Posterior cingulate gyrus (tissue), 11 donors: ENCODE measurements at regions of chr1 and their contacts with region 1.

Region 1: GRCh38 chr1:117284399-117285215 is 73.9 kb upstream of the VTCN1 start:
- DNase-seq: no peak

Region 2: GRCh38 chr1:117121776-117122697 is 162.6 kb before region 1 on chr1:
- intact Hi-C with region 1: loop called (anchors 5 kb)
- DNase-seq: peak; percentile 94 to 99 (median 97)

Region 3: GRCh38 chr1:117267223-117267774 is 17.3 kb before region 1 on chr1:
- intact Hi-C with region 1: no loop called
- DNase-seq: no peak